ENCODE measurements at regions of chr6 and their contacts with region 1.

Region 1: GRCh38 chr6:150016324-150017185 is 8.8 kb downstream of the RAET1L start:
- DNase-seq: peak; percentile 18 to 83 (median 55)
- ATAC-seq: peak; percentile 88
- H3K4me3 ChIP-seq: no peak overlapping the region
- H3K4me3 Mint-ChIP-seq: no peak overlapping the region
- H3K27ac ChIP-seq: no peak overlapping the region
- H3K27ac Mint-ChIP-seq: no peak overlapping the region
- H3K4me1 ChIP-seq: peaks cover 5% of the 10 kb centered on the region
- H3K4me1 Mint-ChIP-seq: peaks cover 9% of the 10 kb centered on the region
- H3K27me3 ChIP-seq: peaks cover 13 to 28% of the 10 kb centered on the region in 2 experiments
- H3K27me3 Mint-ChIP-seq: peaks cover 64% of the 10 kb centered on the region
- CTCF ChIP-seq: peak; percentile 70

Region 2: GRCh38 chr6:149723771-149724417 is 292.7 kb before region 1 on chr6:
- CTCF ChIA-PET with region 1: no interaction called
- POLR2A ChIA-PET with region 1: no interaction called
- intact Hi-C with region 1: loop called in 1 of 2 experiments (anchors 5 kb)
- DNase-seq: peak in 8 of 9 experiments; percentile 27 to 69 (median 44)
- ATAC-seq: peak; percentile 94
- H3K4me3 ChIP-seq: no peak overlapping the region
- H3K4me3 Mint-ChIP-seq: no peak overlapping the region
- H3K27ac ChIP-seq: no peak overlapping the region
- H3K27ac Mint-ChIP-seq: no peak overlapping the region
- H3K4me1 ChIP-seq: peaks cover 13% of the 10 kb centered on the region
- H3K4me1 Mint-ChIP-seq: peaks cover 18% of the 10 kb centered on the region
- H3K27me3 ChIP-seq: no peaks in the 10 kb centered on the region
- H3K27me3 Mint-ChIP-seq: no peaks in the 10 kb centered on the region
- CTCF ChIP-seq: peak; percentile 69

Region 3: GRCh38 chr6:149950423-149950822 is 66.1 kb before region 1 on chr6:
- CTCF ChIA-PET with region 1: interaction called, 9 read pairs
- POLR2A ChIA-PET with region 1: interaction called, 3 read pairs
- intact Hi-C with region 1: loop called in 1 of 2 experiments (anchors 5 kb)
- DNase-seq: no peak
- ATAC-seq: no peak
- H3K4me3 ChIP-seq: no peak overlapping the region
- H3K4me3 Mint-ChIP-seq: no peak overlapping the region
- H3K27ac ChIP-seq: no peak overlapping the region
- H3K27ac Mint-ChIP-seq: no peak overlapping the region
- H3K4me1 ChIP-seq: no peaks in the 10 kb centered on the region
- H3K4me1 Mint-ChIP-seq: peaks cover 6% of the 10 kb centered on the region
- H3K27me3 ChIP-seq: peaks cover 10 to 11% of the 10 kb centered on the region in 2 experiments
- H3K27me3 Mint-ChIP-seq: peaks cover 53% of the 10 kb centered on the region
- CTCF ChIP-seq: no peak